Heart right ventricle (tissue), 16 donors: ENCODE measurements at regions of chr15 and their contacts with region 1.

Region 1: GRCh38 chr15:68441045-68441743 is 9.2 kb upstream of the ITGA11 start:
- DNase-seq: no peak
- ATAC-seq: peak in 6 of 8 donors; percentile 34 to 67 (median 59)
- H3K4me3 ChIP-seq: no peak overlapping the region
- H3K27ac ChIP-seq: peak overlapping the region in 1 of 10 donors; percentile 56
- H3K4me1 ChIP-seq: peaks cover 0 to 18% (median 8%) of the 10 kb centered on the region in 9 donors
- H3K27me3 ChIP-seq: peaks cover 0 to 27% (median 12%) of the 10 kb centered on the region in 7 donors
- CTCF ChIP-seq: no peak

Region 2: DNA sequence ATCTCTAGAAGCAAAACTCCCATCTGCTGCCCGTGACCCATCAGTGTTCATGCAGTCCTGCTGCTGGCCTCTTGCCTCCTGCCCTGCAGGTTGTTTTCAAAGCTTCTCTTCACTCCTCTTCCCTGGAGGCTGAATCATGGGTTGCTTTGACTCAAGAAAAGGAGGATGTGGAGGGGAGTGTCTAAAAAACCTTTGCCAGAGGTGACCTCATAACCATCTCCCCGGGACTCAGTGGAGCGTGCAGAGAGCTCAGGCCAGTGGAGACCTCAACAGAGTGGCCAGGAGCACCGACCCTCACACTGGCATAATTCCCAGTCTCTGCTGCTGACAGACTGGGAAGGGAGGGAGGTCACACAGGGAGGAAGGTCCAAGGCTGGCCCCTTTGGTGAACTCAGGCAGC is 51.7 kb after region 1 on chr15:
- intact Hi-C with region 1: loop called in 1 of 10 experiments (anchors 10 kb)
- DNase-seq: no peak
- ATAC-seq: peak; percentile 49 to 91 (median 73)
- H3K4me3 ChIP-seq: no peak overlapping the region
- H3K27ac ChIP-seq: no peak overlapping the region
- H3K4me1 ChIP-seq: peaks cover 0 to 22% (median 10%) of the 10 kb centered on the region in 9 donors
- H3K27me3 ChIP-seq: peaks cover 0 to 7% (median 0%) of the 10 kb centered on the region in 7 donors
- CTCF ChIP-seq: no peak

Region 3: GRCh38 chr15:68559345-68560310 is 118.4 kb after region 1 on chr15:
- intact Hi-C with region 1: no loop called
- DNase-seq: peak; percentile 76 to 86
- ATAC-seq: peak; percentile 92 to 98 (median 94)
- H3K4me3 ChIP-seq: peak overlapping the region in 9 of 10 donors; percentile 21 to 63 (median 50)
- H3K27ac ChIP-seq: peak overlapping the region in 3 of 10 donors; percentile 19 to 48 (median 44)
- H3K4me1 ChIP-seq: peaks cover 0 to 19% (median 7%) of the 10 kb centered on the region in 9 donors
- H3K27me3 ChIP-seq: peaks cover 0 to 23% (median 0%) of the 10 kb centered on the region in 7 donors
- CTCF ChIP-seq: peak; percentile 90 to 99 (median 98)

Region 4: GRCh38 chr15:69025320-69025719 is 584.1 kb after region 1 on chr15:
- intact Hi-C with region 1: no loop called
- DNase-seq: no peak
- ATAC-seq: no peak
- H3K4me3 ChIP-seq: no peak overlapping the region
- H3K27ac ChIP-seq: no peak overlapping the region
- H3K4me1 ChIP-seq: no peaks in the 10 kb centered on the region
- H3K27me3 ChIP-seq: peaks cover 0 to 5% (median 0%) of the 10 kb centered on the region in 7 donors
- CTCF ChIP-seq: no peak